ENCODE measurements at regions of chr11 and their contacts with region 1.

Region 1: GRCh38 chr11:103601225-103601846 is 435.1 kb upstream of the DDI1 start:
- H3K4me3 ChIP-seq: no peak overlapping the region
- H3K27ac ChIP-seq: no peak overlapping the region
- H3K4me1 ChIP-seq: no peaks in the 10 kb centered on the region
- CTCF ChIP-seq: no peak

Region 2: GRCh38 chr11:102226702-102227490 is 1374.4 kb before region 1 on chr11:
- CTCF ChIA-PET with region 1: no interaction called
- POLR2A ChIA-PET with region 1: no interaction called
- H3K4me3 ChIP-seq: no peak overlapping the region
- H3K27ac ChIP-seq: no peak overlapping the region
- H3K4me1 ChIP-seq: no peaks in the 10 kb centered on the region; the same call in 1 of the 2 replicates
- CTCF ChIP-seq: no peak

Region 3: GRCh38 chr11:103257360-103257759 is 344.0 kb before region 1 on chr11:
- CTCF ChIA-PET with region 1: interaction called, 19 read pairs
- POLR2A ChIA-PET with region 1: no interaction called
- H3K4me3 ChIP-seq: no peak overlapping the region
- H3K27ac ChIP-seq: no peak overlapping the region
- H3K4me1 ChIP-seq: no peaks in the 10 kb centered on the region
- CTCF ChIP-seq: no peak

Region 4: DNA sequence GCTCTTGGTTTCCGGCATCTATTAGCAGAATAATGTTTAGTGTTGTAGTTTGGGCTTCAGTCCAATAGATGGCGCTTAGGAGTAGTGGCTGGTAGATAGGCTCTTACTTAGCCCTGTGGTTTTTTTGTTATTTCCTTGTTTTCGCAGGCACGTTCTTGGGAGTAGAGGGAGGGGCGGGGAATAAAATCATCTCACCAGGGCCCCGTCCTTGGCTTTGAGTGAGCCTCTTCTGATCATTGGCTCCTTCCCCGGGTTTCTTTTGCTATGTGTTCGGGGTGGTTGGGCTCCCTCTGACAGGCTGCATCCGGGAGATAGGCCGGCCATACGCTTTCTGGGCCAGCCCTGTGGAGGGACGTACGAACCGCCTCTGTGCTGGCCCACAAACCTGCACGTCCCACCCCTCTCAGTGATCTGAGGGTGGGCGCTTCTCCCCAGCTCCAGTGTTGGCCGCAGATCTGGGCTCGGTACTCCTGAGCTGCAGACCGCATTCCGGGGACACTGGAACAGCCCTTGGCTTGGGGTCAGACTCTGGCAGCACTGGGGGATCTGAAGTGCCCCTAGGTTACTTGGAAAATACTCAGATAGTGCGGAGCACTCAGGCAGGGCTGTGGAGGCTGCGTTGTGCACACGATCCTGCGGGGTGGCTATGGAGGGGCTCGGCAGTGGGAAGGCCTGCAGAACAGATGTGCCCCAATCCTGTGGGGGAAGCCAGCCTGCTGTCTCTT is 275.1 kb before region 1 on chr11:
- CTCF ChIA-PET with region 1: interaction called, 15 read pairs
- POLR2A ChIA-PET with region 1: no interaction called
- H3K4me3 ChIP-seq: no peak overlapping the region
- H3K27ac ChIP-seq: no peak overlapping the region
- H3K4me1 ChIP-seq: no peaks in the 10 kb centered on the region
- CTCF ChIP-seq: peak; percentile 24; the same call in 1 of the 2 replicates

Measured in HEK293 (cell line).